ENCODE measurements at regions of chr1 and their contacts with region 1.

Region 1: GRCh38 chr1:172180501-172181285 is 239.8 kb upstream of the C1orf105 start:
- DNase-seq: peak; percentile 69
- ATAC-seq: peak; percentile 88
- H3K4me3 ChIP-seq: peak overlapping the region; percentile 58
- H3K27ac ChIP-seq: peak overlapping the region; percentile 86
- H3K4me1 ChIP-seq: peaks cover 29% of the 10 kb centered on the region
- H3K27me3 ChIP-seq: no peaks in the 10 kb centered on the region
- CTCF ChIP-seq: no peak
- EP300 ChIP-seq: peak in 1 of 2 experiments; percentile 36; a peak in 1 of 4 replicates
- POLR2A ChIP-seq: 0 out of 2 replicates have a peak, but pooled peaks have one; percentile 22
- RAD21 ChIP-seq: peak; percentile 26; the same call in 1 of the 2 replicates

Region 2: DNA sequence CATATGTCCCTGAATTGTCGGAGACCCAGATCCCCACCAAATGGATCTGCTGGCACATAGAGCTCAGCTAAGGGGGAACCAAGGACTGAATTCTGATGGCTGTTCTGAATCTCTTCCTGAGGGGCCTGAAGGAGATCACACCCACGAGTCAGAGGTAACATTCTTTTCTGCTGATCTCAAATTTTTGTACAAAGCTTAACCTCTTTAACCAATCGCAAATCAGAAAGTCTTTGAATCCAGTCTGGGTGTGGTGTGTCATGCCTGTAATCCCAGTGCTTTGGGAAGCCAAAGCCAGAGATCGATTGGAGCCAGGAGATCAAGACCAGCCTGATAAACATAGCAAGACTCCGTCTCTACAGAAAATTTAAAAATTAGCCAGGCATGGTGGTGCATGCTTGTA is 758.2 kb before region 1 on chr1:
- CTCF ChIA-PET with region 1: no interaction called
- POLR2A ChIA-PET with region 1: no interaction called
- RAD21 ChIA-PET with region 1: no interaction called
- SMC1A ChIA-PET with region 1: no interaction called
- in situ Hi-C with region 1: no loop called
- intact Hi-C with region 1: no loop called
- DNase-seq: no peak
- ATAC-seq: no peak
- H3K4me3 ChIP-seq: no peak overlapping the region
- H3K27ac ChIP-seq: no peak overlapping the region
- H3K4me1 ChIP-seq: no peaks in the 10 kb centered on the region; the same call in 1 of the 2 replicates
- H3K27me3 ChIP-seq: no peaks in the 10 kb centered on the region
- CTCF ChIP-seq: no peak
- EP300 ChIP-seq: no peak
- POLR2A ChIP-seq: no peak
- RAD21 ChIP-seq: no peak

Region 3: GRCh38 chr1:171858696-171859095 is 322.0 kb before region 1 on chr1:
- CTCF ChIA-PET with region 1: no interaction called
- POLR2A ChIA-PET with region 1: no interaction called
- RAD21 ChIA-PET with region 1: no interaction called
- SMC1A ChIA-PET with region 1: no interaction called
- in situ Hi-C with region 1: no loop called
- intact Hi-C with region 1: no loop called
- DNase-seq: no peak
- ATAC-seq: no peak
- H3K4me3 ChIP-seq: no peak overlapping the region
- H3K27ac ChIP-seq: no peak overlapping the region
- H3K4me1 ChIP-seq: no peaks in the 10 kb centered on the region
- H3K27me3 ChIP-seq: no peaks in the 10 kb centered on the region
- CTCF ChIP-seq: no peak
- EP300 ChIP-seq: no peak
- POLR2A ChIP-seq: no peak
- RAD21 ChIP-seq: no peak

Region 4: DNA sequence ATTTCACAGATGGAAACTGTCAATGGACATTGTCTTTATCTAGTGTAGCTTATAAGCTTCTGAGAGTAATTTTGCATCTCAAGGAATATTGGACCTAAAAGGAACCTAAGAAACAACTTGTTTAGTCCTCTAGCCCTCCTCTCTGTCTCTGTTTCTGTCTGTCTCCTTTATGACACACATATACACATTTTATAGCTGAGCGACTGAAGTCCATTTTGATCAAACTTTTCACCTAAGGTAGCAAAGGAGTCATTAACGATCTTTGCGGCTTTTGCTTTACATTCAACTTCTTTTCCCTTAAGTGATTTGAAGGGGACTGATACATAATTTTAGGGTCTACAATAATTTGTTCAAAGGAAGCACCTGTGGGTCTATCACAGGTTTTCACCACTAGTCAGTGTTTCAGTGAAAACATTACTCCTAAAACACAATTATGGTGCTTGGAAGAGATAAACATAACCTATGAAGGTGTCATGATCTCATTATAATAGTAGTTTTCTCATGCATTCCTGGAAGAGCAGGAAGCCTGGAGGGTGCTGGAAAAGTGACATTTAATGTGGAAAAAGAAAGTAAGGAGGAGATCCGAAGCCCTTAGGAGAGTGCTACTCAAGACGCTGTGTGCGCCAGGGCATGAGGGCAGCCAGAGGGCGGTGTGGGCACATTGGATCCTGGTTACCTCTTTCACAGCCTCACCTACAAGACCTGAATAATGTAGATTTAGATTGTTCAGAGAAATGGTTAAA is 90.8 kb before region 1 on chr1:
- CTCF ChIA-PET with region 1: interaction called, 18 read pairs
- POLR2A ChIA-PET with region 1: no interaction called
- RAD21 ChIA-PET with region 1: interaction called, 4 read pairs
- SMC1A ChIA-PET with region 1: interaction called, 14 read pairs
- in situ Hi-C with region 1: no loop called
- intact Hi-C with region 1: loop called (anchors 2 kb)
- DNase-seq: peak; percentile 50
- ATAC-seq: peak; percentile 100
- H3K4me3 ChIP-seq: no peak overlapping the region
- H3K27ac ChIP-seq: no peak overlapping the region
- H3K4me1 ChIP-seq: no peaks in the 10 kb centered on the region
- H3K27me3 ChIP-seq: no peaks in the 10 kb centered on the region
- CTCF ChIP-seq: peak; percentile 78 to 89 (median 79)
- EP300 ChIP-seq: no peak
- POLR2A ChIP-seq: no peak
- RAD21 ChIP-seq: peak; percentile 85

Region 5: DNA sequence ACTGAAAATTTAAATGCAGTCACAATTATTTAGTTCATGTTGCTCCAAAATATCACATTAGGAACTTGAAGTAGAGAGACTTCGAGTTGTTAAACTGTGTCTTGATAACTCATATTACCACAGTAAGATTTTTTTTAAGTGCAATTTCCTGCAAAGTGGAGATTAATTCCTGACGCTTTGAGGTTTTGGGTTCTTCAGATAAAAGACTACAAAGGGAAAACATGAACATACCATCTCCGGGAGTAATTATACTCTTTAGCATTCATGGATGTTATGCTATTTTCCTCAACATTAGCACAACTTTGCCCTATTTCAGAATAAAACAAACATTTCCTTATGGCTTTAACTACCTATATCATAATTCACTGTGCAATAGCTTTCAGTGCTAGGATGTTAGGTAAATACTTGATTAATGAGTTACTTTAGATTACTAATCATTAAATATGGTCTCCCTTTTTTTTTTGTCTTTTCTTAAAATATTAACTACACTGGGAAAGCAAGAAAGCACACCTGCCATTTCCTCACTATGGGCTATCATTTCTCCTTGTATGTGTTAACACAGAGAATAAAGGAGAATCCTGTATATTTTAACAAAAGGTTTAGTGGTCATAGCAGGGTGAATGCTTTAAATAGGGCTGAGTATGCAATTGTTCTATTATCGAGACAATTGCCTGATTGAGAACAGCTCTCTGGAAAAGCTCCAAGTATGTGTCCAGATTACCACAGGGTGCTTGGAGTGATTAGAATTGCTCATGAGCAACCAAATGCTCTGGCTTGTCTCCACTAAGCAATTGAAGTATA is 12.7 kb before region 1 on chr1:
- CTCF ChIA-PET with region 1: interaction called, 9 read pairs
- POLR2A ChIA-PET with region 1: interaction called, 3 read pairs
- RAD21 ChIA-PET with region 1: interaction called, 7 read pairs
- SMC1A ChIA-PET with region 1: interaction called, 14 read pairs
- in situ Hi-C with region 1: no loop called
- intact Hi-C with region 1: no loop called
- DNase-seq: no peak
- ATAC-seq: no peak
- H3K4me3 ChIP-seq: no peak overlapping the region
- H3K27ac ChIP-seq: no peak overlapping the region
- H3K4me1 ChIP-seq: no peaks in the 10 kb centered on the region
- H3K27me3 ChIP-seq: no peaks in the 10 kb centered on the region; a peak in 1 of 4 replicates
- CTCF ChIP-seq: no peak
- EP300 ChIP-seq: no peak
- POLR2A ChIP-seq: no peak
- RAD21 ChIP-seq: no peak

Region 6: DNA sequence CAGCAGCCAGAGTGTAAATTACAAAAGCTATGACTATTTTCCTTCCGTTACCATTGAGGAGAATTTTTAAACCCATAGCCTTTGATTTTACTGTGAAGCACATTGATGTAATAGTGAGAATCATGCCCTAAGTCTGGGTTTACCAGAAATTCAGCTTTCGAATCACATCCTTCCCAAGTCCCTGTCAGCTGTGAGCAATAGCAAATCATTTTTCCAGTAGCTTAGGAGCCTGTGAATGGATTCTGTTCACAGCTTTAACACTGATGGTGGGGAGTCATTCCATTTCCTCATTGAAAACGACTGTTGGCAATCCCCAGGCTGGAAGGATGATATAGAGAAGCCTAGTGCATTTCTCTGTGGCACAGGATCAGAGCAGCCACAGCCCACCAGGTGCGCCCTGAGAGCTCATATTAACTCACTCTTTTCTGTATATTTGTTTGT is 157.6 kb after region 1 on chr1:
- CTCF ChIA-PET with region 1: interaction called, 5 read pairs
- POLR2A ChIA-PET with region 1: interaction called, 6 read pairs
- RAD21 ChIA-PET with region 1: interaction called, 27 read pairs
- SMC1A ChIA-PET with region 1: interaction called, 130 read pairs
- in situ Hi-C with region 1: no loop called
- intact Hi-C with region 1: loop called (anchors 1 kb)
- DNase-seq: peak; percentile 74
- ATAC-seq: peak; percentile 74
- H3K4me3 ChIP-seq: peak overlapping the region; percentile 28; the same call in 1 of the 2 replicates
- H3K27ac ChIP-seq: peak overlapping the region; percentile 98
- H3K4me1 ChIP-seq: peaks cover 44% of the 10 kb centered on the region
- H3K27me3 ChIP-seq: no peaks in the 10 kb centered on the region
- CTCF ChIP-seq: no peak
- EP300 ChIP-seq: peak in 1 of 2 experiments; percentile 34; a peak in 1 of 4 replicates
- POLR2A ChIP-seq: no peak
- RAD21 ChIP-seq: no peak

Region 7: DNA sequence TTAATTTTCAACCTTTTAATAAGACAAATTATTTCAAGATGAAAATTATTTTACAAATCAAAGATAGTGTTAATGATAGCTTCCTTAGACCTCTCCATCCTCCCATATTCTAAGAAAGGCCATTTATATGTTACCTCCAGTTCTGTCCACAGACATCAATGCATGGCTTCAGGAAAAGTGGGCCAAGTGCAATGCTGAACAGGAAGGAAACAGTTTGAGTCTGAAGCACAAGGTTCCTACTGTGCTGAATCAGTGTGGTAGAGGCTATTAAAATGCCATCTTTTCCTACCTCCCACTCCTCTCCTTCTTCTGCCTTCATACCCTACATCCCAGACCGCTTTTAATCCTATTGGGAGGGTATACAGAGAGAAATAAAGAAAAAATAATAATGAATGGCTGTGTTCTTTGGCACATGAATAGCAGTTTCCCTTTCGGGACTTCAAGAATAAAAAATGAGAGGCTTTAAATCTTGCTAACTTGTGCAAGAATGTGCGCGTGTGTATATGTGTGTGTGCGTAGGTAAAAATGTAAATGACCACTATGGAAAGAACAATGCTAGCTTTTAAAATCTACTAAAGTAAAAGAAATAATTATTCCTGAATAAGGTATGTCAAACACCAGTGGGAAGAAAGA is 177.2 kb after region 1 on chr1:
- CTCF ChIA-PET with region 1: interaction called, 16 read pairs
- POLR2A ChIA-PET with region 1: interaction called, 10 read pairs
- RAD21 ChIA-PET with region 1: interaction called, 47 read pairs
- SMC1A ChIA-PET with region 1: interaction called, 46 read pairs
- in situ Hi-C with region 1: no loop called
- intact Hi-C with region 1: loop called (anchors 5 kb)
- DNase-seq: no peak
- ATAC-seq: peak; percentile 35
- H3K4me3 ChIP-seq: 0 out of 2 replicates have a peak overlapping the region, but pooled peaks have one; percentile 12
- H3K27ac ChIP-seq: peak overlapping the region; percentile 96
- H3K4me1 ChIP-seq: peaks cover 48% of the 10 kb centered on the region
- H3K27me3 ChIP-seq: no peaks in the 10 kb centered on the region
- CTCF ChIP-seq: no peak
- EP300 ChIP-seq: no peak
- POLR2A ChIP-seq: no peak
- RAD21 ChIP-seq: no peak

Region 8: GRCh38 chr1:172398970-172399755 is 218.5 kb after region 1 on chr1:
- CTCF ChIA-PET with region 1: interaction called, 11 read pairs
- POLR2A ChIA-PET with region 1: interaction called, 3 read pairs
- RAD21 ChIA-PET with region 1: interaction called, 180 read pairs
- SMC1A ChIA-PET with region 1: interaction called, 39 read pairs
- in situ Hi-C with region 1: loop called (anchors 5 kb)
- intact Hi-C with region 1: loop called (anchors 2 kb)
- DNase-seq: no peak
- ATAC-seq: peak; percentile 58
- H3K4me3 ChIP-seq: 0 out of 2 replicates have a peak overlapping the region, but pooled peaks have one; percentile 3
- H3K27ac ChIP-seq: peak overlapping the region; percentile 89
- H3K4me1 ChIP-seq: peaks cover 58% of the 10 kb centered on the region
- H3K27me3 ChIP-seq: no peaks in the 10 kb centered on the region
- CTCF ChIP-seq: peak; percentile 35 to 58 (median 54); a peak in 5 of 6 replicates
- EP300 ChIP-seq: no peak
- POLR2A ChIP-seq: no peak
- RAD21 ChIP-seq: peak; percentile 76

Measured in GM12878 (cell line).